Head of caudate nucleus (tissue), 42 donors: ENCODE measurements at regions of chr1 and their contacts with region 1.

Region 1: GRCh38 chr1:21198929-21199328 is 22.2 kb upstream of the EIF4G3 start:
- DNase-seq: peak in 2 of 42 donors; percentile 7 to 35

Region 2: GRCh38 chr1:20696397-20697329 is 502.3 kb before region 1 on chr1:
- intact Hi-C with region 1: loop called (anchors 5 kb)
- DNase-seq: peak; percentile 56 to 90 (median 82)

Region 3: GRCh38 chr1:20981915-20982314 is 217.0 kb before region 1 on chr1:
- intact Hi-C with region 1: loop called (anchors 5 kb)
- DNase-seq: peak in 1 of 42 donors; percentile 38

Region 4: GRCh38 chr1:21050031-21050430 is 148.9 kb before region 1 on chr1:
- intact Hi-C with region 1: no loop called
- DNase-seq: no peak